Naive thymus-derived CD4-positive, alpha-beta T cell (primary cell): ENCODE measurements at regions of chr14 and their contacts with region 1.

Region 1: DNA sequence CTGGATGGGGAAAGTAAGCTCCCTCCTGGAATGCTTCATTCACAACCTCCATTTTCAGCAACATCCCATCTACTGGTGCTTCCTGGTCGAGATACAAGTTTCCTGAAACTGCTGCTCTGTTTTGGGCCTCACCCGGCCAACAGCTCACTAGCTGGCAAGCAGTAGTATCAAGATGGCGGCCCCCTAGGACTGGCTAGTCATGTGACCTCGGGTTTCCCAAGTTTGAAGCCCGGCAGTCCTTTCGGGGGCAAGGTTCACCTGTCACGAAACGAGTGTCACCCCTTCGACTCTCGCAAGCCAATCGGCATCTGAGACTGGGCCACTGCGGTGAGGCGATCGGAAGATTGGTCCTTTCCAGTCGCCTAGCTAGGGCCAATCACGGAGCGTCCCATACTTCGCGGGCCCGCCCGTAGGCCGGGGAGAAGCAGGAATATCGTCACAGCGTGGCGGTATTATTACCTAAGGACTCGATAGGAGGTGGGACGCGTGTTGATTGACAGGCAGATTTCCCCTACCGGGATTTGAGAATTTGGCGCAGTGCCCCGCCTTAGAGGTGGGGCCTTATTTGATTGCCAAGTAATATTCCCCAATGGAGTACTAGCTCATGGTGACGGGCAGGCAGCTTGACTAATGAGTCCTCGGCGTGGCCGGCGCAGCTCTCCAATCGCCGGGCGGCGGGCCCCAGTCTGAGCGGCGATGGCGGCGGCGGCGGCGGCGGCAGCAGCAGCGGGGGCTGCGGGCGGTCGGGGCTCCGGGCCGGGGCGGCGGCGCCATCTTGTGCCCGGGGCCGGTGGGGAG is at the start of gene PABPN1:
- DNase-seq: peak; percentile 87 to 100 (median 99)
- ATAC-seq: peak; percentile 91
- H3K4me3 ChIP-seq: peak within 1 kb of the TSS; percentile 84
- H3K4me3 Mint-ChIP-seq: peak within 1 kb of the TSS; percentile 91 to 97 (median 93)
- H3K27ac ChIP-seq: peak within 1 kb of the TSS; percentile 96
- H3K27ac Mint-ChIP-seq: peak within 1 kb of the TSS; percentile 96 to 99 (median 98)
- H3K4me1 ChIP-seq: peaks cover 22% of the 10 kb centered on the region in 2 donors
- H3K4me1 Mint-ChIP-seq: peaks cover 22 to 38% (median 32%) of the 10 kb centered on the region in 7 donors
- H3K27me3 ChIP-seq: no peaks in the 10 kb centered on the region
- H3K27me3 Mint-ChIP-seq: peaks cover 0 to 3% (median 0%) of the 10 kb centered on the region in 5 donors
- total RNA-seq, gene PABPN1: 176 to 213 (median 196) TPM

Region 2: DNA sequence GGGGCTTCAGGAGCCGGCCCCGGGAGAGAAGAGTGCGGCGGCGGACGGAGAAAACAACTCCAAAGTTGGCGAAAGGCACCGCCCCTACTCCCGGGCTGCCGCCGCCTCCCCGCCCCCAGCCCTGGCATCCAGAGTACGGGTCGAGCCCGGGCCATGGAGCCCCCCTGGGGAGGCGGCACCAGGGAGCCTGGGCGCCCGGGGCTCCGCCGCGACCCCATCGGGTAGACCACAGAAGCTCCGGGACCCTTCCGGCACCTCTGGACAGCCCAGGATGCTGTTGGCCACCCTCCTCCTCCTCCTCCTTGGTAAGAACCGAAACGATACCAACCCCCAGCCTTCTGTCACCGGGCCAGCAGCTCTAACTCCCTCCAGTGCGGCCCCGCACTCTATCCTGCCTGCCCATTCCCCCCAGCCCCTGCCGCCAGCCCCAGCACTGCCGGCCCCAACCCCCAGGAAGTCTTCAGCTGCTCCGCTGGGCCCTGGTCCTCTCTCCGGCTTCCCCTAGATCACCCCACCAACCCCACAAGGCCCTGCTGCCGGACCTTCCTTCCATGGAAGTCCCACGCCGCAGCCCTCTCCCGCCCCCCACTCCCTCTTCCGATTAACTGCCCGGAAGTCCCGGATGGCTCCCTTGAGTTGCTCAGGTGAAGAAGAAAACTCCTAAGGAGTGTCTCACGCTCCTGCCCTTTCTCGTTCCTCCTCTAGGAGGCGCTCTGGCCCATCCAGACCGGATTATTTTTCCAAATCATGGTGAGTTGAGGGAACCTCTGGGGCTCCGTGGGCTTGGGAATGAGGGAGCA is 448.7 kb before region 1 on chr14:
- CTCF ChIA-PET with region 1: no interaction called
- POLR2A ChIA-PET with region 1: no interaction called
- intact Hi-C with region 1: loop called in 1 of 2 experiments (anchors 1 kb)
- DNase-seq: peak; percentile 55 to 76 (median 69)
- ATAC-seq: peak; percentile 57
- H3K4me3 ChIP-seq: peak overlapping the region; percentile 72
- H3K4me3 Mint-ChIP-seq: peak overlapping the region; percentile 87 to 98 (median 95)
- H3K27ac ChIP-seq: peak overlapping the region; percentile 86
- H3K27ac Mint-ChIP-seq: peak overlapping the region; percentile 83 to 98 (median 94)
- H3K4me1 ChIP-seq: peaks cover 20 to 33% of the 10 kb centered on the region in 2 donors
- H3K4me1 Mint-ChIP-seq: peaks cover 26 to 49% (median 29%) of the 10 kb centered on the region in 7 donors
- H3K27me3 ChIP-seq: no peaks in the 10 kb centered on the region
- H3K27me3 Mint-ChIP-seq: no peaks in the 10 kb centered on the region

Region 3: GRCh38 chr14:23120541-23121251 is 200.3 kb before region 1 on chr14:
- CTCF ChIA-PET with region 1: interaction called, 4 read pairs
- POLR2A ChIA-PET with region 1: interaction called, 20 read pairs
- intact Hi-C with region 1: loop called in 1 of 2 experiments (anchors 2 kb)
- DNase-seq: peak; percentile 58 to 77 (median 74)
- ATAC-seq: peak; percentile 92
- H3K4me3 ChIP-seq: peak overlapping the region; percentile 53
- H3K4me3 Mint-ChIP-seq: peak overlapping the region; percentile 63 to 87 (median 72)
- H3K27ac ChIP-seq: peak overlapping the region; percentile 71
- H3K27ac Mint-ChIP-seq: peak overlapping the region; percentile 90 to 99 (median 96)
- H3K4me1 ChIP-seq: peaks cover 21 to 41% of the 10 kb centered on the region in 2 donors
- H3K4me1 Mint-ChIP-seq: peaks cover 26 to 65% (median 48%) of the 10 kb centered on the region in 7 donors
- H3K27me3 ChIP-seq: no peaks in the 10 kb centered on the region
- H3K27me3 Mint-ChIP-seq: peaks cover 0 to 5% (median 0%) of the 10 kb centered on the region in 5 donors

Region 4: DNA sequence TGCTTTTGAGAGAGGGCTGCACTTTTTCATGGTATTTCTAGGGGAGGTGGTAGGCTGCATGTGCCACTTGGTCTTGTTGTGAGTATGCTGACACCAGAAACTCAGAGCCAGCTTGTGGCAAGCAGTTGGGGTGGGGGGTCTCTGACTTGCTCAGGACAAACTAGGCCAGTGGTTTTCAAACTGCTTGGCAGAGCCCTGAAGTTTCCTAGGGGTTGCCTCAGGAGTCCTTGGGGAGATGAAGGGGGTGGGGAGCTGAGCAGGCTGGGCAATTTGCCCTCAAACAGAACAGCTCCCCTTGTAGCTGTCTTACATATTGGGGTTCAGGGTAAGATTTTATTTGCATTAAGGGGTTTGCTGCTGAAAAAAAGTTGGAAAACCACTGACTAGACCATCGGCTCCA is 10.4 kb before region 1 on chr14:
- CTCF ChIA-PET with region 1: interaction called, 3 read pairs
- POLR2A ChIA-PET with region 1: interaction called, 286 read pairs
- intact Hi-C with region 1: no loop called
- DNase-seq: no peak
- ATAC-seq: no peak
- H3K4me3 ChIP-seq: no peak overlapping the region
- H3K4me3 Mint-ChIP-seq: no peak overlapping the region
- H3K27ac ChIP-seq: no peak overlapping the region
- H3K27ac Mint-ChIP-seq: no peak overlapping the region
- H3K4me1 ChIP-seq: no peaks in the 10 kb centered on the region
- H3K4me1 Mint-ChIP-seq: peaks cover 0 to 18% (median 4%) of the 10 kb centered on the region in 7 donors
- H3K27me3 ChIP-seq: no peaks in the 10 kb centered on the region
- H3K27me3 Mint-ChIP-seq: peaks cover 16 to 30% (median 19%) of the 10 kb centered on the region in 5 donors

Region 5: GRCh38 chr14:23555882-23556699 is 235.1 kb after region 1 on chr14 and contains the start of gene THTPA:
- CTCF ChIA-PET with region 1: interaction called, 3 read pairs
- POLR2A ChIA-PET with region 1: interaction called, 12 read pairs
- intact Hi-C with region 1: loop called (anchors 1 kb)
- DNase-seq: peak; percentile 84 to 96 (median 89)
- ATAC-seq: peak; percentile 94
- H3K4me3 ChIP-seq: peak within 1 kb of the TSS; percentile 84
- H3K4me3 Mint-ChIP-seq: peak within 1 kb of the TSS; percentile 80 to 99 (median 96)
- H3K27ac ChIP-seq: peak within 1 kb of the TSS; percentile 83
- H3K27ac Mint-ChIP-seq: peak within 1 kb of the TSS; percentile 78 to 97 (median 94)
- H3K4me1 ChIP-seq: peaks cover 10 to 16% of the 10 kb centered on the region in 2 donors
- H3K4me1 Mint-ChIP-seq: peaks cover 18 to 45% (median 38%) of the 10 kb centered on the region in 7 donors
- H3K27me3 ChIP-seq: no peaks in the 10 kb centered on the region
- H3K27me3 Mint-ChIP-seq: peaks cover 0 to under 1% (median 0%) of the 10 kb centered on the region in 5 donors
- total RNA-seq, gene THTPA: 16.4 to 26.7 (median 19.2) TPM

Region 6: DNA sequence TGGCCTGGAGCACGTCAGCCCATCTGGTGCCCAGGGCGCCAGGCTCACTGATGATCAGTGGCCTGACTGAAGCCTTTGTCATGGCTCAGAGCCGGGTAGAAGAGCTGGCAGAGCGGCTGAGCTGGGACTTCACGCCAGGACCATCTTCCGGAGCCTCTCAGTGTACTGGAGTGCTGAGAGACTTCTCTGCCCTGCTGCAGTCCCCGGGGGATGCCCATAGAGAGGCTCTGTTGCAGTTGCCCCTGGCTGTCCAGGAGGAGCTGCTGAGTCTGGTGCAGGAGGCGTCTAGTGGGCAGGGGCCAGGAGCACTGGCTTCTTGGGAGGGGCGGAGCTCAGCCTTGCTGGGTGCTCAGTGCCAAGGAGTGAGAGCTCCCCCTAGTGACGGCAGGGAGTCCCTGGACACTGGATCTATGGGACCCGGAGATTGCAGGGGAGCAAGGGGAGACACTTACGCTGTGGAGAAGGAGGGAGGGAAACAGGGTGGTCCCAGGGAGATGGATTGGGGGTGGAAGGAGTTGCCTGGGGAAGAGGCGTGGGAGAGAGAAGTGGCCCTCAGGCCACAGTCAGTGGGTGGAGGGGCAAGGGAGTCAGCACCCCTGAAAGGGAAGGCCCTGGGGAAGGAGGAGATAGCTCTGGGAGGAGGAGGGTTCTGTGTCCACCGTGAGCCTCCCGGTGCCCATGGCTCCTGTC is 1110.7 kb after region 1 on chr14:
- CTCF ChIA-PET with region 1: no interaction called
- POLR2A ChIA-PET with region 1: no interaction called
- intact Hi-C with region 1: loop called in 1 of 2 experiments (anchors 2 kb)
- DNase-seq: peak; percentile 76 to 91 (median 86)
- ATAC-seq: peak; percentile 77
- H3K4me3 ChIP-seq: peak overlapping the region; percentile 96
- H3K4me3 Mint-ChIP-seq: peak overlapping the region; percentile 82 to 96 (median 91)
- H3K27ac ChIP-seq: peak overlapping the region; percentile 99
- H3K27ac Mint-ChIP-seq: peak overlapping the region; percentile 51 to 97 (median 96)
- H3K4me1 ChIP-seq: peaks cover 24 to 41% of the 10 kb centered on the region in 2 donors
- H3K4me1 Mint-ChIP-seq: peaks cover 19 to 59% (median 53%) of the 10 kb centered on the region in 7 donors
- H3K27me3 ChIP-seq: no peaks in the 10 kb centered on the region
- H3K27me3 Mint-ChIP-seq: no peaks in the 10 kb centered on the region